T-cell (primary cell): ENCODE measurements at regions of chr1 and their contacts with region 1.

Region 1: GRCh38 chr1:27203946-27204345 is 30.5 kb upstream of the WDTC1 start:
- DNase-seq: no peak
- ATAC-seq: no peak
- H3K4me3 ChIP-seq: no peak overlapping the region
- H3K4me3 Mint-ChIP-seq: no peak overlapping the region
- H3K27ac ChIP-seq: no peak overlapping the region
- H3K27ac Mint-ChIP-seq: no peak overlapping the region
- H3K4me1 ChIP-seq: no peaks in the 10 kb centered on the region
- H3K4me1 Mint-ChIP-seq: no peaks in the 10 kb centered on the region
- H3K27me3 ChIP-seq: peaks cover 0 to 4% of the 10 kb centered on the region in 2 experiments
- H3K27me3 Mint-ChIP-seq: no peaks in the 10 kb centered on the region

Region 2: GRCh38 chr1:25425098-25426085 is 1778.6 kb before region 1 on chr1:
- CTCF ChIA-PET with region 1: no interaction called
- POLR2A ChIA-PET with region 1: interaction called in 1 of 2 experiments, 10 read pairs
- DNase-seq: no peak
- ATAC-seq: no peak
- H3K4me3 ChIP-seq: no peak overlapping the region
- H3K4me3 Mint-ChIP-seq: no peak overlapping the region
- H3K27ac ChIP-seq: no peak overlapping the region
- H3K27ac Mint-ChIP-seq: no peak overlapping the region
- H3K4me1 ChIP-seq: peaks cover 0 to 2% of the 10 kb centered on the region in 2 experiments
- H3K4me1 Mint-ChIP-seq: peaks cover 6 to 10% (median 7%) of the 10 kb centered on the region in 3 donors
- H3K27me3 ChIP-seq: peaks cover 0 to 3% of the 10 kb centered on the region in 2 experiments
- H3K27me3 Mint-ChIP-seq: peaks cover 0 to 3% of the 10 kb centered on the region in 2 donors

Region 3: GRCh38 chr1:27258598-27258997 is 54.7 kb after region 1 on chr1:
- CTCF ChIA-PET with region 1: no interaction called
- POLR2A ChIA-PET with region 1: interaction called in 1 of 2 experiments, 15 read pairs
- DNase-seq: peak in 7 of 35 experiments; percentile 0 to 35 (median 4)
- ATAC-seq: peak; percentile 54 to 87 (median 74)
- H3K4me3 ChIP-seq: no peak overlapping the region
- H3K4me3 Mint-ChIP-seq: peak overlapping the region in 2 of 3 donors; percentile 56 to 58
- H3K27ac ChIP-seq: no peak overlapping the region
- H3K27ac Mint-ChIP-seq: peak overlapping the region; percentile 51 to 76
- H3K4me1 ChIP-seq: peaks cover 16 to 19% of the 10 kb centered on the region in 2 experiments
- H3K4me1 Mint-ChIP-seq: peaks cover 38 to 42% (median 40%) of the 10 kb centered on the region in 3 donors
- H3K27me3 ChIP-seq: no peaks in the 10 kb centered on the region
- H3K27me3 Mint-ChIP-seq: no peaks in the 10 kb centered on the region